ENCODE measurements at regions of chr12 and their contacts with region 1.

Region 1: DNA sequence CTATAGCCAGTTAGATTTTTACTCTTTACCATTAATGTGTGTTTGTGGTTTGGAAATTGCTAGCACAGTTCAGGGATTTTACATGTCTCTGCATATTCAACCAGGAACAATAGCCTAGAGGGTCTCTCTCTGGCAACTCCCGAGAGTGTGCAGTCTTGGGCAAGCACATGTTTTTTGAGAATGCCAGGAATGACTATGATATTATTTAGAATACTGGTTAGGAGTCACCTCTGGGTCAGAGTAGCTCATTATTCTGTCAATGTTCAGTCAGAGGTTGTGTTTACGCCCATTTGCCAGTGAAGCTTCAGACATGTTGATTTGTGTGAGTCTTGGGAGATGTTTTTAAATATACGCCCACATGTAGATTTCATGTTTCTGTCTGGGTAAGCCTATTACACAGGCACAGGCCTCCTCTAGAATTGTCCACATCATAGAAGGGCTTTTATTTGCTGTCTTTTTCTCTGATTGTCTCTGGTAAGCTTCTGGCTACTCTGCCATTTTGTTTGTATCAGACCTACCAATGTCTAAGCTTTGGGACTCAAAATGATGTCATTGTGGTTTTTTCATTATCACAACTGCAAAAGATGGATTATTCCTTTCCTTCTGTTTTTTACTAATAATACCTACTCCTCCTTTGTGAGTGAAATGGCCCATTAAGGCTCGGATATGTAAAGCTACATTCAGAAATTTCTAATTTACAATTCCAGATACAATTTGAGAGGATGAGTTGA is 203.1 kb upstream of the PPFIA2 start:
- DNase-seq: no peak
- H3K4me3 ChIP-seq: no peak overlapping the region
- H3K27ac ChIP-seq: no peak overlapping the region
- H3K4me1 ChIP-seq: no peaks in the 10 kb centered on the region
- H3K27me3 ChIP-seq: no peaks in the 10 kb centered on the region
- CTCF ChIP-seq: no peak
- EP300 ChIP-seq: no peak
- POLR2A ChIP-seq: no peak

Region 2: DNA sequence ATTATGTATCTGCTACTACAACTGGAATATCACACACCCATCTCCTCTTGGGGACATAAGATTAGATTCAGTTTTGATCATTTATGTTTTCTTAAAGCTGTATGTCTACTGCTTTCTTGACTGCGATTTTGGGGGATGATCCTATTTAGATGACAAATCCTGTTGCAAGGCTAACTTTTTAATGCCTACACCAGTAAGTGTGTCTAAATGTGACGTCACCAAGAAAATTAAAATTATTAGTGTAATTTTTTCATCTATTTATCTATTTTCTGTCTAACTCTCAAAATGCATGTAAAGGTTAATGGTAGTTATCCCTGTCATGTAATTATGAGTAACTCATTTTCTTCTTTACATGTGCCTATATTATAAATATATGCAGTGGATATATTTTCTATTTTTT is 32.3 kb before region 1 on chr12:
- intact Hi-C with region 1: loop called in 1 of 4 experiments (anchors 1 kb)
- DNase-seq: no peak
- H3K4me3 ChIP-seq: no peak overlapping the region
- H3K27ac ChIP-seq: no peak overlapping the region
- H3K4me1 ChIP-seq: no peaks in the 10 kb centered on the region
- H3K27me3 ChIP-seq: no peaks in the 10 kb centered on the region
- CTCF ChIP-seq: no peak
- EP300 ChIP-seq: no peak
- POLR2A ChIP-seq: no peak

Region 3: GRCh38 chr12:81987371-81987770 is 25.1 kb after region 1 on chr12:
- intact Hi-C with region 1: no loop called
- DNase-seq: no peak
- H3K4me3 ChIP-seq: no peak overlapping the region
- H3K27ac ChIP-seq: no peak overlapping the region
- H3K4me1 ChIP-seq: no peaks in the 10 kb centered on the region
- H3K27me3 ChIP-seq: no peaks in the 10 kb centered on the region
- CTCF ChIP-seq: no peak
- EP300 ChIP-seq: no peak
- POLR2A ChIP-seq: no peak

Region 4: DNA sequence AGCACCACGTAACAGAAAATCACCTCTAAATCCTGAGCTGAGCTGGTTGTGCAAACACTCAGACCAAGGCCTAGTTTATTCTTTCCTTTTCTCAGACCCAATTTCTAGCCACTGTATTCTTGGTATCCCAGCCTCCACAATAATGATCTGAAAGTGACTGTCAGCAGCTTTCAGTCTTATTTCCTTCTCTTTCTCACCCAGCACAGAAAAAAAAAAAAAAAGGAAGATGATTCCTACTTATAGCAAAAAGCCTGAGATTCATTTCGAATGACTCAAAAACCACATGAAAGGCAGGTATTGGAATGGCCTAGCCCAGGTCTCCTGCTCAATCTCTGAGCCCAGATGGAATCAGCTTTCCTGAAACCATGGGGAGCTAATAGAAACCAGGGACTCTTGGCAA is 95.5 kb after region 1 on chr12:
- intact Hi-C with region 1: no loop called
- DNase-seq: no peak
- H3K4me3 ChIP-seq: no peak overlapping the region
- H3K27ac ChIP-seq: no peak overlapping the region
- H3K4me1 ChIP-seq: no peaks in the 10 kb centered on the region
- H3K27me3 ChIP-seq: no peaks in the 10 kb centered on the region
- CTCF ChIP-seq: no peak
- EP300 ChIP-seq: no peak
- POLR2A ChIP-seq: no peak

Region 5: DNA sequence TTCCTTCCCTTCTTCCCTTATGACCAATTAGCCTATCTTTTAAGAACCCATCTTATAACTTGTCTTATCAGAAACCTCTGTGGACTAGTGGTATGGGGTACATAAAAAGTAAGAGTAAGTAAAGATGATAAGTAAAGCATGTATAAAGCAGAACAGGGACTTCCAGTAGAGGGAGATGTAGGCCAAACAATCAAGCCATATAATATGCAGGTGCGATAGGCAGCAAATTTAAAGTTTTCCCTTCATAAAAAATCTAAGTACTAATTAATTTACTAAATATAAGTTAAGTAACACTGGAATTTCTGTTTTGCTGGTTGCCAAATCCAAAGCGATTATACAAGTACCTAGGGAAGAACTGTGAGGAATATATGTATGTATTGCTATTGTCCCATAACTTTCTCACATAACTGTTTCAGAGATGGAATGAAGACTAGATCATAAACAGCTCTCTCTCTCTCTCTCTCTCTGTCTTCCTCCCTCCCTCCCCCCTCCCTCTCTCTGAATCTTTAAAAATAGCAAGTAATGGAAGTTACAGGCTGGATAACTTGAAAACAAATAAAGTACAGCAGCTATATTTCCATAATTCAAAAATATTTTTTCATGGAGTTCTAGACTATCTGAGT is 421.8 kb after region 1 on chr12:
- intact Hi-C with region 1: no loop called
- DNase-seq: no peak
- H3K4me3 ChIP-seq: no peak overlapping the region
- H3K27ac ChIP-seq: no peak overlapping the region
- H3K4me1 ChIP-seq: no peaks in the 10 kb centered on the region
- H3K27me3 ChIP-seq: no peaks in the 10 kb centered on the region
- CTCF ChIP-seq: no peak
- EP300 ChIP-seq: no peak
- POLR2A ChIP-seq: no peak

Measured in ovary (tissue), 10 donors.